Spleen (tissue), 13 donors: ENCODE measurements at regions of chr1 and their contacts with region 1.

Region 1: GRCh38 chr1:71049951-71050598 is 2.5 kb upstream of the PTGER3 start:
- DNase-seq: no peak
- H3K4me3 ChIP-seq: no peak overlapping the region
- H3K27ac ChIP-seq: no peak overlapping the region
- H3K4me1 ChIP-seq: peaks cover 0 to 23% (median 19%) of the 10 kb centered on the region in 6 donors
- H3K27me3 ChIP-seq: peaks cover 3 to 53% (median 36%) of the 10 kb centered on the region in 7 donors
- CTCF ChIP-seq: peak; percentile 38 to 80 (median 70)
- POLR2A ChIP-seq: no peak

Region 2: DNA sequence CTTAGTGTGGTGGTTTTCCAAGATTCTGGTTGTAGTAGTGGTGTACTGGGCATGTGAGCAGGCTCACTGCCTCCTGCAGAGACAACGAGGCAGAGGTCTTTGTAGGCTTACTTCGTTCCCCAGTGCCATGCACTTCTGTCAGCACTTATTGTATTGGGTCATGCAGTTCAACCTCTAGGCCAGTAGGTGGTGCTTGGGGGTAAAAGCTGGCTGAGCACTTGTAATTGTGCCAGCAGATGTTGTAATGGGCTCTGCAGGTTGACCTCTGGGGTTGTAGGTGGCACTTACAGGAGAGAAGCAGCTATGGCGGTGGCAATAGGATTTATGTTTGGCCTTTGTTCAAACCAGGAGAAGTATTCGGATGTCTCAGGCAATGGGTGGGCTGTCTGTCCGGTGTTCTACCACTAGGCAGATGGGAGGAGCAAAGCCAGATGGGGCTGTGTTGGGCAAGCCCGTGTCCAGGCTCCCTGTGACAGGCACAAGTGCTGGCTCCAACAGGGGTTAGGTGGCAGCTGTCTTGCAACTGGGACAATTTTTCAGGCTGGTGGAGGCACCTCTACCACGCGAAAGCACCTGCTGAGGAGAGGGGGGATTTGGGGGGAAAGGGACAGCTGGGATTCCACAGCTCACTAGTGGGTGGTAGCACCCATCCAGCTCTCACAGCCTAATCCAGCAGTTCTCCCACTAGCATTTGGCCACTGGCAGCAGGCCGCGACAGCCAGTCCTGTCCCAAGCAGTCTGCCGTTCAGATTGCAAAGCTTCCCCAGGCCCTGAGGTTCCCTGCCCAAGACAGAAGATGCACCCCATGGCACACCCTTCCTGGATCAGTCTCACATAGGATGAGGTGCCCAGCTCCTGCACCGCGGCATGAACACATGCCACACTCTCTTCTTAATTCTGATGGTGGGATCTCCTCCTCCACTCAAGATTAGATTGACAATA is 364.5 kb before region 1 on chr1:
- intact Hi-C with region 1: loop called (anchors 5 kb)
- DNase-seq: no peak
- H3K4me3 ChIP-seq: no peak overlapping the region
- H3K27ac ChIP-seq: no peak overlapping the region
- H3K4me1 ChIP-seq: no peaks in the 10 kb centered on the region
- H3K27me3 ChIP-seq: peaks cover 0 to 10% (median 0%) of the 10 kb centered on the region in 7 donors
- CTCF ChIP-seq: peak; percentile 44 to 83 (median 75)
- POLR2A ChIP-seq: no peak

Region 3: GRCh38 chr1:71210718-71211117 is 160.6 kb after region 1 on chr1:
- intact Hi-C with region 1: no loop called
- DNase-seq: no peak
- H3K4me3 ChIP-seq: no peak overlapping the region
- H3K27ac ChIP-seq: no peak overlapping the region
- H3K4me1 ChIP-seq: no peaks in the 10 kb centered on the region
- H3K27me3 ChIP-seq: no peaks in the 10 kb centered on the region
- CTCF ChIP-seq: no peak
- POLR2A ChIP-seq: no peak

Region 4: DNA sequence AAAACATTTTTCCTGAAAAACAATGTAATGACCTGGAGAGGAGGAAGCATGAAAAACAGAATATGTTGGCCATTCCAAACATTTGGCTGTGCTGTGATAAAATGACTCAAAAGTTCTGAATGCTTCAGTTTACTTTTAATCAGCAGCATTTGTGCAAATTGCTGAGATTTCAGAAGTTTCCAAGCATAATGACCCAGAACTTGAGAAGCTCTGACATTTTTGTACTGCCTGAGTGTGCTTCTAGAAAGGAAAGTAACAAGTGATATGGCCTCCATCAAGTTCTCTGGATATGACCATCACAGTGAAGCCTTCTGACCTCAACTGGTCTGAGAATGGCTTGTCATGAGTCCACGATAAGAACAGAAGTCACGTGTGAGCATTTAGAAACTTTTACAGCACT is 314.2 kb after region 1 on chr1:
- intact Hi-C with region 1: no loop called
- DNase-seq: no peak
- H3K4me3 ChIP-seq: no peak overlapping the region
- H3K27ac ChIP-seq: no peak overlapping the region
- H3K4me1 ChIP-seq: no peaks in the 10 kb centered on the region
- H3K27me3 ChIP-seq: no peaks in the 10 kb centered on the region
- CTCF ChIP-seq: no peak
- POLR2A ChIP-seq: no peak